Adrenal gland (tissue), 19 donors: ENCODE measurements at regions of chr9 and their contacts with region 1.

Region 1: DNA sequence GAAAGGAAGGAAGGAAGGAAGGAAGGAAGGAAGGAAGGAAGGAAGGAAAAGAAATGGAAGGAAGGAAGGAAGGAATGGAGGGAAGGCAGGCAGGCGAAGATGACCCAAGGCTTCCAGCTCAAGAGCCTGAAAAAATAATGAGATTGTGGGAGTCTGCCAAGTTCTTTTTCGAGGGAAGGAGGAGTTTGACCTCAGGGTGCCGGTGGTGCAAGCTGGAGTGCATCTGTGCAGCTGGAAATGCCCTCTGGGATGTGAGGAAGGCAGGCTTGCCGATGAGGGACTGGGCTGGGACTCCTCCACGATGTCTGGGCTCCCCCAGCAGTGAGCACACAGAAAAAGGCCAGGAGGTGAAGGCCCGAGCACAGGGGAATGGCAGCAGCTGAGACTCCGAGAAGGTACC is 154.9 kb upstream of the DAPK1 start:
- DNase-seq: peak in 5 of 7 donors; percentile 11 to 55 (median 27)
- H3K4me3 ChIP-seq: no peak overlapping the region
- H3K27ac ChIP-seq: no peak overlapping the region
- H3K4me1 ChIP-seq: peaks cover 0 to 3% of the 10 kb centered on the region in 2 donors
- H3K27me3 ChIP-seq: peaks cover 7% of the 10 kb centered on the region
- CTCF ChIP-seq: no peak
- POLR2A ChIP-seq: no peak

Region 2: DNA sequence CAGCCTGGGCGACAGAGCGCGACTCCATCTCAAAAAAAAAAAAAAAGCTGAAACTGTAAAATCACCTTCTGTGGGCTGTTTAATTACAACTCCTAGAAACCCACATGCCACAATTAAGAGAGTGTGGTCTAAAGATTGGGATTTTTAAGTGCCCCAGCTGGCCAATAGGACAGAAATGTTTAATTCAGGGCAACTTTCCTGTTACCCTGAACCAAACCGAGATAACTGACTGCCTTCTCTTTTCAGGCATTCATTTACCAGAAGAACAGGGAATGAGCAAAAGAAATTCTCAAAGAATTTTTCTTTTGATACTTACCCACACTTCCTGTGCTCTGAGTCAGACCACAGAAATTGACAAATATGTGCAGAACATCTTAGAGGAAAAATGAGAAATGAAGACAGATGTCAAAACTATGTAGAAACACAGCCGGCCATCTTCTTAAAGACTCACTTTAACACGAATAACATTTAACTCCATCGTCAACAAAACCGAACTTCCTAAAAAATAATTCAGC is 66.4 kb before region 1 on chr9:
- intact Hi-C with region 1: no loop called
- DNase-seq: no peak
- H3K4me3 ChIP-seq: no peak overlapping the region
- H3K27ac ChIP-seq: no peak overlapping the region
- H3K4me1 ChIP-seq: no peaks in the 10 kb centered on the region
- H3K27me3 ChIP-seq: no peaks in the 10 kb centered on the region
- CTCF ChIP-seq: no peak
- POLR2A ChIP-seq: no peak

Region 3: DNA sequence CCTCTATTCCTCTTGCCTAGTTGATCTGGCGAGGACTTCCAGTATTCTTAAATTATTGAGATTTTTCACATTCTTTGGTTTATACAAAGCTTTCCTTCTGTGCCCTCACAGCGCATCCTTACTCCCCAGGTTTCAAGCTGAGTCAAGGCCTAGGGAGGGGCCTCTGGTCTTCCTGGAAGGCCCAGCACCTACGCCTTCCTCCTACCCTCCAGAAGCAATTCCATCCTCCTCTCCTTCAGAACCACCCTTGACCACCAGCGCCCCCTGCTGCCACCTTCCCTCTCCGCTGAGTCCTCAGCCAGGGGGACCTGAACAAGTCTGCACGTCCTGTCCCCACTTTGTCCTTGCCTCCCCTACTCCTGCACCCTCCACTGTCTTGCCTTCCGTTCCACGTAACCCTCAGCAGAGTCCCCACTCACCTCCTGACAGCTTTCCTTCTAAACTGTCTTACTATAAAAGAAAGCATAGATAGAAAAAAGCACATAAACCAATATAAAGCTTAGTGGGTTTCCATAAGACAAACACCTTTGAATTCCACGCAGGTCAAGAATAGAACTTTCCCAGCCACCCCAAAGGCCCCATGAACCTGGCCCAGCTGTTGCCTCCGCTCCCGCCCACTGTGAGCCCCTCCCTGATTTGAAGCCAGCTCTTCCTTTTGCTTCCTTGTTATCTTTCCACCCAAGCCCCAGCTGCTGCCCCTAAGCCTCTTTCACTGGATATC is 320.2 kb after region 1 on chr9:
- intact Hi-C with region 1: loop called (anchors 2 to 5 kb)
- DNase-seq: peak; percentile 61 to 84 (median 78)
- H3K4me3 ChIP-seq: no peak overlapping the region
- H3K27ac ChIP-seq: no peak overlapping the region
- H3K4me1 ChIP-seq: no peaks in the 10 kb centered on the region
- H3K27me3 ChIP-seq: no peaks in the 10 kb centered on the region
- CTCF ChIP-seq: peak; percentile 65 to 85 (median 78)
- POLR2A ChIP-seq: no peak